WTC11 (cell line): ENCODE measurements at regions of chr3 and their contacts with region 1.

Region 1: DNA sequence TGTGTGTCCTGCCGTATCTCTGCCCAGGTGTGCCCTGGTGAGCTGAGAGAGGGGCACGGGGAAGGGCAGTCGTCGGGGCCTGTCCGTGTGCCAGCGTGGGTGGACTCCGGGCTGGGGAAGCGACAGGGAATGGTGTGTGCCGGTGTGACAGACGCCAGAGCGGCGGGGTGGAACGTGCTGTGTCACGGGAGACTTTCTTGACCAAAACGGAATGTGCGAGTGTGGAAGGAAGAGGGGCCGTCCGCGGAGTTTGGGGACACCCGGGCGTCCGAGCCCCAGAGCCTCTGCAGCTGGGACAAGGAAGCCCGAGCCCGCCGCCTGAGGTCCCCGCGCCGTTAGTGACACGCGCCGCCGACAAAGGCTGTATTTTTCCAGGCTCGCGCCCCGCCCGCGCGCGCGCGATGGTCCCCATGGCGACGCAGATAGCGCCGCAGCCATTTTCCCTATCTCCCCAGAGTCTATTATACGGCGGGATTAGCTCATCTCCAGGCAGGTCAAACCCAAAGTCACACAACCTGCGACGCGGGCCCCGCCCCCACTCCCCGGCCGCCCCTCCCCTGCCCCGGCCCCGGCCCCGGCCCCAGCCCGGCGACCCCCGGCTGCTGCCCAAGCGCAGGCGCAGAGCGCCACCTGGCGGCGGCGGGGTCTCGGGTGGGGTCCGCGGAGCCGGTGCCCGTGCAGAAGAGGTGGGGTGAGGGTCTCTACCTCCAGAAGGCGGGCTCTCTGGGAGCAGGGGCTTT is 4.6 kb upstream of the GATA2 start:
- DNase-seq: peak; percentile 93
- ATAC-seq: peak; percentile 66
- H3K4me3 Mint-ChIP-seq: peak overlapping the region; percentile 71
- H3K27ac Mint-ChIP-seq: no peak overlapping the region
- H3K4me1 Mint-ChIP-seq: peaks cover 21% of the 10 kb centered on the region
- H3K27me3 Mint-ChIP-seq: peaks cover 88% of the 10 kb centered on the region
- CTCF ChIP-seq: peak; percentile 86

Region 2: DNA sequence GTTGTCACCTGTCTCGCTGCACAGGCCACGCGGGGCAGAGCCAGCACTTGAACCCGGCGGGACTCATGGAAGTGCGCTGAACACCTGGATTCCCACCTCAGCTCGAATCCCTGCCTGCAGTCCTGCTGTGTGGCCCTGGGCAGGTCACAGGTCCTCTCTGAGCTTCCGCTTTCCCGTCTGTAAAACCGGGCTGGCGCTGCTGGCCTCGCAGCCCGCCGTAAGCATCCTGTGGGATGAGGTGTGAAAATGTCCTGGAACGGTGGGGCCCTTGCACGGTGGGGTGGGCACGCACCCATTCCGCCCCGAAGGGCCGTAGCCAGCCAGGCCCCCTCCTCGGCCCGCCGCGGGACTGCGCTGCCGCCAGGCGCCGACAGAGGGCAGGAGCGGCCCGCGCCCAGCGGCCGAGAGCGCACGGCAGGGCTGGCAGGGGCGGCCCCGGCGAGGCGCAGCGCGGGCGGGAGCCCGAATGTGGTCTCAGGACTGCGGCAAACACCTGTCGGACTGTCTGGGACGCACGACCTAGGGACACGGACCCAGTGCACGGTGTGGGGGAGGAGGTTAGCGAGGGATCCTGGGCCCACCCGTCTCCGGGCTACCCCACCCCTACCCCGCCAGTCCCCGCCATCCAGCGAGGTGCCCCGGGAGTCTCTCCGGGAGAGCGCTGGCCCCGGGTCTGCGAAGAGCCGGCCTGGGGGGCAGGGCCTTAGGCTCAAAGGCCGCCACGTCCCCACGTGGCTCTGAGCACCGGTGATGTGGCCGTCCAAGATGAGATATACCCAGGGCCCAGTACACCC is 71.2 kb before region 1 on chr3:
- CTCF ChIA-PET with region 1: interaction called, 54 read pairs
- POLR2A ChIA-PET with region 1: no interaction called
- DNase-seq: peak; percentile 77
- ATAC-seq: peak; percentile 81
- H3K4me3 Mint-ChIP-seq: no peak overlapping the region
- H3K27ac Mint-ChIP-seq: no peak overlapping the region
- H3K4me1 Mint-ChIP-seq: peaks cover 22% of the 10 kb centered on the region
- H3K27me3 Mint-ChIP-seq: peaks cover 57% of the 10 kb centered on the region
- CTCF ChIP-seq: peak; percentile 79

Region 3: DNA sequence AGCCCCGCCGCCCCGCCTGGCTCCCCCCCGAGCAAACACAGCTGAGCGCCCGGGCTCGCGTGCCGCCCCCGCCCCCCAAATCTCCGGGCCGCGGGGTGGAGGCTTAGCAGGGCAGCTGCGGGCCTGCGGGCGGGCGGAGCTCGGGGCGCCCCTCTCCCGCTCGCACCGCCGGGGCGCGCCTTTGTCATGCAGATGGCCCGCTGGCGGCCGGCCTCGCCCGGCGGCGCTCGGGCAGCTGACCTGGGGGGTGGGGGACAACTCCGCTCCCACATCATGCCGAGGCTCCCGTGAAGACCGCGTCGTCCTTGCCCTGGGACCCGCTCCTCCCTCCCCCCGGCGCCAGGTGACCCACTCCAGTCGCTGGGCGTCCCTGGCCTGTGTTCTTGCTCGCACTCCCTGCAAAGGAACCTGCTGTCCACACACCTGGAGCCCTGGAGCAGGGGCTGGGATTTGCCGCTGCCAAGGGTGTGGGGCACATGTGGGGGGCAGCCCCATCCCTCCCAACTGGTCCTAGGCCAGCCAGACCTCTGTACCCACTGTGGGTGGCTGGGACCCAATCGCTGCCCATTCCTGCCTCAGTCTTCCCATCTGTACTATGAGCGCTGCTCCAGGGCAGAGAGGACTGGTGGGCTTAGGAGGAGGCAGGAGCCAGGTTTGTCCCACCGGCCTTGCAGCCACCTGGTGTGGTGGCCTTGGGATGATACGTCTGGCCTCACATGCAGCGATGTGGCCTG is 64.4 kb before region 1 on chr3:
- CTCF ChIA-PET with region 1: interaction called, 54 read pairs
- POLR2A ChIA-PET with region 1: no interaction called
- DNase-seq: peak; percentile 68
- ATAC-seq: peak; percentile 36
- H3K4me3 Mint-ChIP-seq: peak overlapping the region; percentile 56
- H3K27ac Mint-ChIP-seq: no peak overlapping the region
- H3K4me1 Mint-ChIP-seq: peaks cover 48% of the 10 kb centered on the region
- H3K27me3 Mint-ChIP-seq: peaks cover 68% of the 10 kb centered on the region
- CTCF ChIP-seq: no peak

Region 4: GRCh38 chr3:128458746-128459460 is 38.7 kb before region 1 on chr3:
- CTCF ChIA-PET with region 1: interaction called, 10 read pairs
- POLR2A ChIA-PET with region 1: no interaction called
- DNase-seq: no peak
- ATAC-seq: no peak
- H3K4me3 Mint-ChIP-seq: no peak overlapping the region
- H3K27ac Mint-ChIP-seq: no peak overlapping the region
- H3K4me1 Mint-ChIP-seq: no peaks in the 10 kb centered on the region
- H3K27me3 Mint-ChIP-seq: peaks cover 27% of the 10 kb centered on the region
- CTCF ChIP-seq: no peak

Region 5: GRCh38 chr3:128482666-128483656 is 14.6 kb before region 1 on chr3:
- CTCF ChIA-PET with region 1: interaction called, 45 read pairs
- POLR2A ChIA-PET with region 1: no interaction called
- DNase-seq: peak; percentile 47
- ATAC-seq: no peak
- H3K4me3 Mint-ChIP-seq: peak overlapping the region; percentile 57
- H3K27ac Mint-ChIP-seq: no peak overlapping the region
- H3K4me1 Mint-ChIP-seq: peaks cover 64% of the 10 kb centered on the region
- H3K27me3 Mint-ChIP-seq: peaks cover 100% of the 10 kb centered on the region
- CTCF ChIP-seq: no peak

Region 6: DNA sequence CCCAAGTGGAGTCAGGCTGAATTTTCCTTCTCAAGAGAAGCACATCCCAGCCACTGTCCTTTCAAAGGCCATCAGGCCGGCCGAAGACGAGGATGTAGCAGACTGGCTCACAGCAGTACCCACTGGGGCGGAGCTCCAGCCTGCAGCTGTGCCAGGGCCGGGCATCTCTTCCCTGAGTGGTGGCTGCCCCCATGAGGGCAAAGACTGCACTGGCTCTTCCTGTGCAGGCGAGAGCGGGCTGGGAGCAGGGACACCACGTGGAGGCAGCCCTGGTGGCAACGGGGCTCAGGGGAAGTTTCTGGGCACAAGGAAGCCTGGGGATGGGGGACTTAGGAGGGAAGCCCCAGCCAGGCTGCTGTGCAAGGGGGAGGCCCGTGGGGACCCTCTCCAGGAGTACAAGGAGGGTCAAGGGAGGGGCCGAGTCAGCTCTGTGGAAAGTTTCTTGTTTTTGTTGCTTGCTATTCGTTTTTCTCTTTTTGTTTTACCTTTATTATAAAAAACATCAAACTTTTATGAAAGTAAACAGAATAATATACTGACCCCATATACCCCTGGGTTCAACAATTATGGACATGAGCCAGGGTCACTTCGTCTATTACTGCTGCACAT is 87.0 kb after region 1 on chr3:
- CTCF ChIA-PET with region 1: interaction called, 21 read pairs
- POLR2A ChIA-PET with region 1: no interaction called
- DNase-seq: peak; percentile 82
- ATAC-seq: peak; percentile 99
- H3K4me3 Mint-ChIP-seq: no peak overlapping the region
- H3K27ac Mint-ChIP-seq: no peak overlapping the region
- H3K4me1 Mint-ChIP-seq: peaks cover 14% of the 10 kb centered on the region
- H3K27me3 Mint-ChIP-seq: peaks cover 8% of the 10 kb centered on the region
- CTCF ChIP-seq: 0 out of 2 replicates have a peak, but pooled peaks have one; percentile 42

Region 7: DNA sequence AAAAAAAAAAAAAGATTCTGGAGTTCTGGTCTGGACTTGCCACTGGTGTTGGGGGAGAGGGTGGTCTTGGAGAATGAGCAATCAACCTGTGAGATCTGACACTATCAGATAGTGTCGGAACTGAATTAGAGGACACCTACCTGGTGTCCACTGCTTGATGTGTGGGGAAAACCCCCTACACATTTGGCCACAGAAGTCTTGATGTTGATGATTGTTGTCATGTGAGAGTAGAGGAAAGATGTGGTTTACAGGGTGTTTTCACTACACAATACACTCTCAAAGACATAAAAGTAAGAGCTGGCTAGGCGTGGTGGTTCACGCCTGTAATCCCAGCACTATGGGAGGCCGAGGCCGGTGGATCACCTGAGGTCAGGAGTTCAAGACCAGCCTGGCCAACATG is 191.5 kb after region 1 on chr3:
- CTCF ChIA-PET with region 1: no interaction called
- POLR2A ChIA-PET with region 1: no interaction called
- DNase-seq: no peak
- ATAC-seq: no peak
- H3K4me3 Mint-ChIP-seq: no peak overlapping the region
- H3K27ac Mint-ChIP-seq: no peak overlapping the region
- H3K4me1 Mint-ChIP-seq: no peaks in the 10 kb centered on the region
- H3K27me3 Mint-ChIP-seq: no peaks in the 10 kb centered on the region; the same call in none of the 2 replicates
- CTCF ChIP-seq: no peak

Region 8: DNA sequence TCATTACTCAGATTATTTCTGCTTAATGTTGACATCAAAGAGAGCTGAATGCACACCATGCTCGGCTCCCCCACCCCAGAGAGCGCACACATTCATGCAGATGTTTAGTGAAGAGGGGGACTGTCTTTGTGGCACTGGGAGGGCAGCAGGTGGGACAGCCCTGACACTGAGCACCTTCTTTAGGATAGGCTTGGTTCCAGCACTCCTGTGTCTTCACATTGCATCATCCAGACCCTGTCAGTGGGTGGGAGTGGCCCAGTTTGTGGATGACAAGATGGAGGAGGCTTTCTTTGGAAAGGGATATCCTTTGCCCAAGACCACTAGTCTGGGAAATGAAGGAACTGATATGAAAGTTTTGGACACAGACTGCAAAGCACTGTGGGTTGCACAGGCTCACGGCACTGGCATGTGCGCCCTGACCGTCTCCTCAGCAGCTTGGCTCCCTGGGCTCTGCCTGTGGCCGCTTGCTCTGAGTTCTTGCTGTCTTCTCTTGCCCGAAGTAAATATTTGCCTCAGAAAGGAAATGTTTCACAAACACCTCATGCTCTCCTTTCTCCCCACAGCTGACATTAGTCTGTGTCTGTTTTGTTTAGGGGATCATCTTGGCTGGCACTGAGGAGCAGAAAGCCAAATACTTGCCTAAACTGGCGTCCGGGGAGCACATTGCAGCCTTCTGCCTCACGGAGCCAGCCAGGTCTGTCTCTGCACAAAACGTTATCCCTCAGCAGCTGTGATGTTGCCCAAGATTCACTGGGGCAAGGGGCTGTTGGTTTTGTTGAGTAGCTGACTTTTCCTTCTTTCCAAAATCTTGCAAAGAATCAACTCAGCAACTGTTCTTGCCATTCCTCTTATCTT is 398.5 kb after region 1 on chr3:
- CTCF ChIA-PET with region 1: no interaction called
- POLR2A ChIA-PET with region 1: no interaction called
- DNase-seq: no peak
- ATAC-seq: no peak
- H3K4me3 Mint-ChIP-seq: no peak overlapping the region
- H3K27ac Mint-ChIP-seq: no peak overlapping the region
- H3K4me1 Mint-ChIP-seq: no peaks in the 10 kb centered on the region
- H3K27me3 Mint-ChIP-seq: no peaks in the 10 kb centered on the region
- CTCF ChIP-seq: no peak